ENCODE measurements at regions of chr11 and their contacts with region 1.

Region 1: DNA sequence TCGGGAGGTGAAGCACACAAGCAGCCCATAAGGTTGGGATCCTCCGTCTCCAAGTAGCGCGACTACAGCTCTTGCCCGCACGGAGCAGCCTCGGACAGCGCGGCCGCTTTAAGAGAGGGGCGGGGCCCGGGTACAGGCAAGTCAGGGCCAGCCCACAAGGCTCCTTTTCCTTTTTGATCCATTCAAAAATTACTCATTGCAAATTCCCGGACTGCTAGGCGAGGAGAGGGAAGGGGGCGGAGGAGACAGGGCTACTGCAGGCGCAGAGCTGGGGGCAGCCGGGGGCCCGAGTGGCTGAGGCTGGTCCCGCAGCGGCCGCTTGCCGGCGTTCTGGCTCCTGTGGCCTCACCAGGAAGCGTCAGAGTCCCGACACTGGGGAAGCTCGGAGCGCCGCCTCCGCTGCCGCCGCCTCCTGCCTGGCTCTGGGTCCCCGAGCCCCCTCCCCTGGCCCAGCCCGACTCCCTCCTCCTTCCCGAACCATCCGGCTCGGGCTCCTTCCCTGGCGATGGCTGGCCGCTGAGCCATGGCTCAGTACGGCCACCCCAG is at the start of gene UBASH3B:
- DNase-seq: peak; percentile 10 to 75 (median 57)
- ATAC-seq: peak; percentile 72
- H3K4me3 ChIP-seq: peak within 1 kb of the TSS; percentile 96 to 97
- H3K4me3 Mint-ChIP-seq: peak within 1 kb of the TSS; percentile 99
- H3K27ac ChIP-seq: peak within 1 kb of the TSS; percentile 61 to 71
- H3K27ac Mint-ChIP-seq: peak within 1 kb of the TSS; percentile 93
- H3K4me1 ChIP-seq: peaks cover 44% of the 10 kb centered on the region
- H3K4me1 Mint-ChIP-seq: peaks cover 46% of the 10 kb centered on the region
- H3K27me3 ChIP-seq: peaks cover 0 to 2% of the 10 kb centered on the region in 2 experiments
- H3K27me3 Mint-ChIP-seq: no peaks in the 10 kb centered on the region
- CTCF ChIP-seq: no peak
- total RNA-seq, gene UBASH3B: 16.7 to 19.3 TPM

Region 2: DNA sequence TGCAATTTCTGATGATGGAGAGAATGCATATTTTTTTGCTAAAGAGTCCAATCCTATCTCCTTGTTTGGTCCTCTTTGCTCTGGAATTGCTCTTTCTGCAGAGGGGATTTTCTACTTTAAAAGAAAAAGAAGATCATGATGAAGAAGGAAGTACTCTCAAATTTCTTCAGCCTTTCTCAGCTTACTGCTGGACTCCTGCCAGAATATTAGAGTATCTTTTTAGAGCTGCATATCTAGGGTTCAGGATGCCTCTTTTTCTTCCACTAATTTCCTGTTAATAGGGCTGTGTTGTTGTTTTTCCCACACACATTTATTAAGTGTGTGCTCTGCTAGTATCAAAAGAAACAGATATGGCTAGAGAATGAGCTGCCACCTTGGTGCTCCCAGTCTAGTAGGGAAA is 18.1 kb after region 1 on chr11:
- CTCF ChIA-PET with region 1: interaction called, 49 read pairs
- POLR2A ChIA-PET with region 1: interaction called, 26 read pairs
- intact Hi-C with region 1: loop called (anchors 1 to 2 kb)
- DNase-seq: peak in 1 of 9 experiments; percentile 32
- ATAC-seq: no peak
- H3K4me3 ChIP-seq: no peak overlapping the region
- H3K4me3 Mint-ChIP-seq: no peak overlapping the region
- H3K27ac ChIP-seq: no peak overlapping the region
- H3K27ac Mint-ChIP-seq: peak overlapping the region; percentile 39
- H3K4me1 ChIP-seq: peaks cover 73% of the 10 kb centered on the region
- H3K4me1 Mint-ChIP-seq: peaks cover 82% of the 10 kb centered on the region
- H3K27me3 ChIP-seq: no peaks in the 10 kb centered on the region
- H3K27me3 Mint-ChIP-seq: no peaks in the 10 kb centered on the region
- CTCF ChIP-seq: no peak

Region 3: GRCh38 chr11:122697636-122698167 is 42.1 kb after region 1 on chr11:
- CTCF ChIA-PET with region 1: interaction called, 36 read pairs
- POLR2A ChIA-PET with region 1: interaction called, 23 read pairs
- intact Hi-C with region 1: loop called (anchors 1 kb)
- DNase-seq: peak in 7 of 9 experiments; percentile 14 to 72 (median 60)
- ATAC-seq: peak; percentile 81
- H3K4me3 ChIP-seq: peak overlapping the region; percentile 4 to 25
- H3K4me3 Mint-ChIP-seq: peak overlapping the region; percentile 66
- H3K27ac ChIP-seq: peak overlapping the region; percentile 57 to 64
- H3K27ac Mint-ChIP-seq: peak overlapping the region; percentile 94
- H3K4me1 ChIP-seq: peaks cover 80% of the 10 kb centered on the region
- H3K4me1 Mint-ChIP-seq: peaks cover 91% of the 10 kb centered on the region
- H3K27me3 ChIP-seq: no peaks in the 10 kb centered on the region
- H3K27me3 Mint-ChIP-seq: no peaks in the 10 kb centered on the region
- CTCF ChIP-seq: no peak

Region 4: DNA sequence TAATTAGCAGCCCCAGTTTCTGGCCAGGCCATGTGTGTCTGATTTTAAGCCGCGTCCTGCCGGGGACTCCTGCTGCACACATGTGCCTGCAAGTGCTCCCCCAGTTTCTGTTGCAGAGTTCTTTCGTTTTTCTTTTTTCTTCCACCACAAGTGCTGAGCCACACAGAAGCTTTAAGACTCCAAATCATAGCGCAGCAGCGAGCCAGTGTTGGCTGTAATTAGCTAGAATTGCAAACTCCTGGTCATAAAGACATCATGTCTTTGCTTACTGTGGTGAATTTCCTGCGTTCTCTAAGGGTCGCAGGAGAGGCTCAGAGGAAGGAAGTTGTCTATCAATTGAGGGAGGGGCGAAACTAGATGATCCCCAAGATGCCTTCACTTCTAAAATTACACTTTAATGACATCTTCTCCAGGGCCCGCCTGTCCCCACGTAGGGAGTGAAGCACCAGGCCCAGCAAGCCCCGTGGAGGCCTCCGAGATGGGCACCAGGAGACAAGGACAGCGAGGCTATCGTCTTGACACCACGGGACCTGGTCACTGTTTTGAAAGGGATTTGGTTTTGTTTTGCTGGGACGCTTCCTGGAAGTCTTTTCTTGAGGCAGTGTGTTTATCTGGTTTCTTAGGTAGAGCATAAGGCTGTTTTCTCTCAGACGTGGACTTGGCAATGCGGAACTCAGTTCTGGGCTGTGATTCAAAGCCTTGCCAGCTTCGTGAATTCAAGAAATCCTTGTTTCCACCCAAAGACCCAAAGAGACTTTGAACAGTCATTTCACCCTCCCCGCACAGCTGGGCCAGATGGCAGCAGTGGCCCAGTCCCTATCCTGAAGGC is 71.7 kb after region 1 on chr11:
- CTCF ChIA-PET with region 1: interaction called, 11 read pairs
- POLR2A ChIA-PET with region 1: interaction called, 8 read pairs
- intact Hi-C with region 1: loop called in 1 of 2 experiments (anchors 2 kb)
- DNase-seq: peak in 8 of 9 experiments; percentile 6 to 67 (median 39)
- ATAC-seq: peak; percentile 74
- H3K4me3 ChIP-seq: peak overlapping the region; percentile 3 to 28
- H3K4me3 Mint-ChIP-seq: peak overlapping the region; percentile 80
- H3K27ac ChIP-seq: peak overlapping the region; percentile 56 to 74
- H3K27ac Mint-ChIP-seq: peak overlapping the region; percentile 98
- H3K4me1 ChIP-seq: peaks cover 66% of the 10 kb centered on the region
- H3K4me1 Mint-ChIP-seq: peaks cover 80% of the 10 kb centered on the region
- H3K27me3 ChIP-seq: no peaks in the 10 kb centered on the region
- H3K27me3 Mint-ChIP-seq: no peaks in the 10 kb centered on the region
- CTCF ChIP-seq: no peak

Region 5: GRCh38 chr11:122749005-122749687 is 93.5 kb after region 1 on chr11:
- CTCF ChIA-PET with region 1: interaction called, 128 read pairs
- POLR2A ChIA-PET with region 1: interaction called, 33 read pairs
- intact Hi-C with region 1: loop called (anchors 1 kb)
- DNase-seq: peak in 8 of 9 experiments; percentile 25 to 67 (median 51)
- ATAC-seq: peak; percentile 52
- H3K4me3 ChIP-seq: no peak overlapping the region
- H3K4me3 Mint-ChIP-seq: no peak overlapping the region
- H3K27ac ChIP-seq: no peak overlapping the region
- H3K27ac Mint-ChIP-seq: peak overlapping the region; percentile 71
- H3K4me1 ChIP-seq: peaks cover 60% of the 10 kb centered on the region
- H3K4me1 Mint-ChIP-seq: peaks cover 36% of the 10 kb centered on the region
- H3K27me3 ChIP-seq: no peaks in the 10 kb centered on the region
- H3K27me3 Mint-ChIP-seq: no peaks in the 10 kb centered on the region
- CTCF ChIP-seq: no peak

Region 6: DNA sequence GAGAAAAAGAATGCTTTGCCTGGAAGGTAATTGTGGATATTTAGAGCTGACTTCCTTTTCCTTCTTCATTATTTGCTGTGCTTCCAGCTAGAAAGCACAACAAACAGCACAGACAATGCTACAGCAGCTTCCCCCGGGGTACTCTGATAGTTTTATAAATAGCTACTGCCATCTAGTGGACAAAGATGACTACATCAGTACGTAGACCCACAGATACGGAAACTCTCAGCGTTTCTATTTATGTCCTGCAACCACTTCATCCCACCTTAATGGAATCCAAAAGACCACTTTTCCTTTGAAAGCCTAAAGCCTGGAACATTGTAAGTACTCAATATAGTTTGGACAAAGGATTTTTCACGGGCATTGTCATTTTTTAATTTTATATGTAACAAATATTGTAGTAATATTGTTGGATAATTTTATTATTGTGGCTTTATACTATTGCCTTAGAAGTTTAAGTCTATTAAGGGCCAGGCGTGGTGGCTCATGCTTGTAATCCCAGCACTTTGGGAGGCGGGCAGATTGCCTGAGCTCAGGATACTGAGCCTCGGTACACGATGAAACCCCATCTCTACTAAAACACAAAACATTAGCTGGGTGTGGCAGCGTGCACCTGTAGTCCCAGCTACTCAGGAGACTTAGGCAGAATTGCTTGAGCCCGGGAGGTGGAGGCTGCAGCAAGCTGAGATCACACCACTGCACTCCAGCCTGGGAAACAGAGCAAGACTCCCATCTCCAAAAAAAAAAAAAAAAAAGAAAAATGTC is 398.9 kb after region 1 on chr11:
- CTCF ChIA-PET with region 1: no interaction called
- POLR2A ChIA-PET with region 1: interaction called, 3 read pairs
- intact Hi-C with region 1: loop called in 1 of 2 experiments (anchors 10 kb)
- DNase-seq: peak in 4 of 9 experiments; percentile 28 to 84 (median 56)
- ATAC-seq: peak; percentile 85
- H3K4me3 ChIP-seq: no peak overlapping the region
- H3K4me3 Mint-ChIP-seq: peak overlapping the region; percentile 67
- H3K27ac ChIP-seq: peak overlapping the region in 1 of 2 experiments; percentile 51
- H3K27ac Mint-ChIP-seq: peak overlapping the region; percentile 97
- H3K4me1 ChIP-seq: peaks cover 55% of the 10 kb centered on the region
- H3K4me1 Mint-ChIP-seq: peaks cover 57% of the 10 kb centered on the region
- H3K27me3 ChIP-seq: no peaks in the 10 kb centered on the region
- H3K27me3 Mint-ChIP-seq: no peaks in the 10 kb centered on the region
- CTCF ChIP-seq: peak; percentile 72

Measured in CD8-positive, alpha-beta T cell (primary cell).